ENCODE measurements at regions of chr1 and their contacts with region 1.

Region 1: DNA sequence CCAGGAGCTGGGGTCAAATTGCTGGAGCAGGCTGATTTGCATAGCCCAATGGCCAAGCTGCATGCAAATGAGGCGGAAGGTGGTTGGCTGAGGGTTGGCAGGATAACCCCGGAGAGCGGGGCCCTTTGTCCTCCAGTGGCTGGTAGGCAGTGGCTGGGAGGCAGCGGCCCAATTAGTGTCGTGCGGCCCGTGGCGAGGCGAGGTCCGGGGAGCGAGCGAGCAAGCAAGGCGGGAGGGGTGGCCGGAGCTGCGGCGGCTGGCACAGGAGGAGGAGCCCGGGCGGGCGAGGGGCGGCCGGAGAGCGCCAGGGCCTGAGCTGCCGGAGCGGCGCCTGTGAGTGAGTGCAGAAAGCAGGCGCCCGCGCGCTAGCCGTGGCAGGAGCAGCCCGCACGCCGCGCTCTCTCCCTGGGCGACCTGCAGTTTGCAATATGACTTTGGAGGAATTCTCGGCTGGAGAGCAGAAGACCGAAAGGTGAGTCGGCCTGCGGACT is at the start of gene GADD45A:
- DNase-seq: peak; percentile 92
- ATAC-seq: peak; percentile 93
- H3K4me3 Mint-ChIP-seq: peak within 1 kb of the TSS; percentile 99
- H3K27ac Mint-ChIP-seq: peak within 1 kb of the TSS; percentile 99
- H3K4me1 Mint-ChIP-seq: peaks cover 27% of the 10 kb centered on the region
- H3K27me3 Mint-ChIP-seq: no peaks in the 10 kb centered on the region
- total RNA-seq, gene GADD45A: 24.4 to 26.2 TPM

Region 2: DNA sequence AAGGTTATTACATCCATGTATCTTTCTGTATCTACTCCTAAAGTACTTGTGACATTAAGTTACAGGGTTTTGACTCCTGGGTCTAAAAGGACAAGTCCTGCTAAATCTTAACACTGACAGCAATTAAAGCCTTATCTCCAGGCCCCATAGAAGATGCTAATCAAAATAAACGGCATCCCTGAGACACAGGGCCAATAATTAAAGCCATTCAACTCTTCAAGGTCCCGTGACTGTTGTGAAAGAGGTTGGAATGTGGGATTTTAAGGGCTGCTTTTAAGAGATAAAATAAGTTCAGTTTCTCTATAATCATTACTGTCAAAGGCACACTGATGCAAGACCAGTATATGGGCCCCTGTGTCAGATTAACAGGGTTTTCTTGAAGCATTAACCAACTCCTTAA is 768.8 kb before region 1 on chr1:
- POLR2A ChIA-PET with region 1: no interaction called
- DNase-seq: no peak
- ATAC-seq: no peak
- H3K4me3 Mint-ChIP-seq: no peak overlapping the region
- H3K27ac Mint-ChIP-seq: no peak overlapping the region
- H3K4me1 Mint-ChIP-seq: no peaks in the 10 kb centered on the region
- H3K27me3 Mint-ChIP-seq: no peaks in the 10 kb centered on the region

Region 3: GRCh38 chr1:67430352-67431155 is 254.6 kb before region 1 on chr1 and contains the start of gene SERBP1:
- POLR2A ChIA-PET with region 1: interaction called, 11 read pairs
- DNase-seq: peak; percentile 93
- ATAC-seq: peak; percentile 89
- H3K4me3 Mint-ChIP-seq: peak within 1 kb of the TSS; percentile 90
- H3K27ac Mint-ChIP-seq: peak within 1 kb of the TSS; percentile 97
- H3K4me1 Mint-ChIP-seq: peaks cover 46% of the 10 kb centered on the region
- H3K27me3 Mint-ChIP-seq: no peaks in the 10 kb centered on the region
- total RNA-seq, gene SERBP1: 219 to 221 TPM

Region 4: GRCh38 chr1:67674260-67675011 is 10.7 kb before region 1 on chr1:
- POLR2A ChIA-PET with region 1: interaction called, 96 read pairs
- DNase-seq: peak; percentile 40
- ATAC-seq: peak; percentile 96
- H3K4me3 Mint-ChIP-seq: peak overlapping the region; percentile 58
- H3K27ac Mint-ChIP-seq: peak overlapping the region; percentile 90
- H3K4me1 Mint-ChIP-seq: peaks cover 23% of the 10 kb centered on the region
- H3K27me3 Mint-ChIP-seq: peaks cover 13% of the 10 kb centered on the region

Region 5: GRCh38 chr1:67735806-67736627 is 50.9 kb after region 1 on chr1:
- POLR2A ChIA-PET with region 1: interaction called, 18 read pairs
- DNase-seq: peak; percentile 58
- ATAC-seq: peak; percentile 99
- H3K4me3 Mint-ChIP-seq: peak overlapping the region; percentile 69
- H3K27ac Mint-ChIP-seq: peak overlapping the region; percentile 90
- H3K4me1 Mint-ChIP-seq: peaks cover 14% of the 10 kb centered on the region
- H3K27me3 Mint-ChIP-seq: peaks cover 2% of the 10 kb centered on the region

Region 6: GRCh38 chr1:67747667-67748546 is 62.8 kb after region 1 on chr1:
- POLR2A ChIA-PET with region 1: interaction called, 12 read pairs
- DNase-seq: no peak
- ATAC-seq: no peak
- H3K4me3 Mint-ChIP-seq: no peak overlapping the region
- H3K27ac Mint-ChIP-seq: no peak overlapping the region
- H3K4me1 Mint-ChIP-seq: peaks cover 14% of the 10 kb centered on the region
- H3K27me3 Mint-ChIP-seq: peaks cover 17% of the 10 kb centered on the region

Measured in activated naive CD8-positive, alpha-beta T cell treated with anti-CD3 and anti-CD28 coated beads, Interleukin-2, amount 10 ng/mL, durations not matched to agents 7 days and 5 days (primary cell).